Esophagus muscularis mucosa (tissue), 4 donors: ENCODE measurements at regions of chr6 and their contacts with region 1.

Region 1: GRCh38 chr6:166950443-166950821 is 5.9 kb downstream of the RNASET2 start:
- DNase-seq: no peak
- H3K4me3 ChIP-seq: no peak overlapping the region
- H3K27ac ChIP-seq: peak overlapping the region in 3 of 4 donors; percentile 3 to 45 (median 5)
- H3K4me1 ChIP-seq: peaks cover 3 to 15% (median 10%) of the 10 kb centered on the region in 4 donors
- H3K27me3 ChIP-seq: no peaks in the 10 kb centered on the region
- CTCF ChIP-seq: no peak
- EP300 ChIP-seq: no peak
- POLR2A ChIP-seq: no peak

Region 2: DNA sequence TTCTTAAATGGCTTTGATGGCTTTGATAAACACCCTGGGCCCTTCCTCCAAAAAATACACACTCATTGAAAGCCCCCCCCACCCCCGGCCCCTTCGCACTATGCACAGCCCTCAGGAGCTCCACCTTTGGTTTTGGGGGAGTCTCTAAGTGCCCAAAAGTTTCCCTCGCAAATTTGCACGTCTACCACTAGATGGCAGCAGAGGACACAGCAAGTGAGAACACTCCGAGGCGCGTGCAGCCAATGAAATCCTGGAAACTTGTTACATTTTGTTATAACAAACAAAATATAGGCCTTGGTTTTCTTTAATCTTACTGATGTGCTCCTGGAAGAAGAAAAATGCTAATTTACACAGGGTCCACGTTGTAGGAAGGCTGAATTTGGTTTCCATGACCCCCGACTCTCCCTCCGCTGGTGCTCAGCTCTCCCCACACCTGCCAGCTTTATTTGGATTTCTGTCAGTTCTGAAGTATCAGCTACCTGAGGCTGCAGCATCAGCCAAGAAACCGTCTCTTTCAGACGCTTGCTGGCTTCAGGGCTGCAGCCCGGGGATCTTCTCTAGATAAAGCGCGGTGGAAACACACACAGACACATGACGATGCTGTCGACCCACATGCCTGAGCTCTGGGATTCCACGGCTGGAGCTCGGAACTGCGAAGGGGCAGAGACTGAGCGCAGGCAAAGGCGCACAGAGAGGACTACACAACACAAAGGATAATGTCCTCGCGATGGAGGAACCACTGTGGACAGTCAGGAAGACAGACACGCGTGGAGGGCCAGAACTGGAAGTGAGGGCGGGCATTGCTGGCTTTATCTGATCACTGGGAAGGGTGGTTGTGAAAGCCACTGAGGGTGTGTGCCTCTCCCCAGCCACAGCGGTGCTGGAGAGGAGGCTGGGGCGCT is 175.0 kb before region 1 on chr6:
- intact Hi-C with region 1: loop called (anchors 5 kb)
- DNase-seq: no peak
- H3K4me3 ChIP-seq: peak overlapping the region in 2 of 4 donors; percentile 21 to 24
- H3K27ac ChIP-seq: no peak overlapping the region
- H3K4me1 ChIP-seq: peaks cover 0 to 11% (median 0%) of the 10 kb centered on the region in 4 donors
- H3K27me3 ChIP-seq: no peaks in the 10 kb centered on the region
- CTCF ChIP-seq: peak; percentile 82 to 89 (median 84)
- EP300 ChIP-seq: no peak
- POLR2A ChIP-seq: no peak

Region 3: GRCh38 chr6:166786704-166787293 is 163.6 kb before region 1 on chr6:
- intact Hi-C with region 1: no loop called
- DNase-seq: peak; percentile 50
- H3K4me3 ChIP-seq: no peak overlapping the region
- H3K27ac ChIP-seq: no peak overlapping the region
- H3K4me1 ChIP-seq: no peaks in the 10 kb centered on the region
- H3K27me3 ChIP-seq: no peaks in the 10 kb centered on the region
- CTCF ChIP-seq: peak; percentile 67 to 73 (median 68)
- EP300 ChIP-seq: no peak
- POLR2A ChIP-seq: no peak